Activated CD4-positive, alpha-beta memory T cell treated with anti-CD3 and anti-CD28 coated beads for 36 hours (primary cell): ENCODE measurements at regions of chr19 and their contacts with region 1.

Region 1: GRCh38 chr19:45817010-45817724 is 2.1 kb upstream of the RSPH6A start:
- DNase-seq: peak; percentile 97
- H3K4me3 Mint-ChIP-seq: peak overlapping the region; percentile 12
- H3K27ac Mint-ChIP-seq: peak overlapping the region; percentile 13
- H3K4me1 Mint-ChIP-seq: no peaks in the 10 kb centered on the region
- H3K27me3 Mint-ChIP-seq: no peaks in the 10 kb centered on the region

Region 2: GRCh38 chr19:45770192-45771101 is 46.7 kb before region 1 on chr19:
- CTCF ChIA-PET with region 1: interaction called, 42 read pairs
- POLR2A ChIA-PET with region 1: no interaction called
- intact Hi-C with region 1: no loop called
- DNase-seq: peak; percentile 92
- H3K4me3 Mint-ChIP-seq: peak overlapping the region; percentile 78
- H3K27ac Mint-ChIP-seq: peak overlapping the region; percentile 28
- H3K4me1 Mint-ChIP-seq: peaks cover 10% of the 10 kb centered on the region
- H3K27me3 Mint-ChIP-seq: peaks cover 9% of the 10 kb centered on the region

Region 3: GRCh38 chr19:45798995-45799517 is 18.1 kb before region 1 on chr19:
- CTCF ChIA-PET with region 1: interaction called, 20 read pairs
- POLR2A ChIA-PET with region 1: interaction called, 5 read pairs
- intact Hi-C with region 1: no loop called
- DNase-seq: peak; percentile 71
- H3K4me3 Mint-ChIP-seq: peak overlapping the region; percentile 3
- H3K27ac Mint-ChIP-seq: peak overlapping the region; percentile 23
- H3K4me1 Mint-ChIP-seq: peaks cover 10% of the 10 kb centered on the region
- H3K27me3 Mint-ChIP-seq: peaks cover 34% of the 10 kb centered on the region

Region 4: GRCh38 chr19:45834970-45835369 is 17.8 kb after region 1 on chr19:
- CTCF ChIA-PET with region 1: interaction called, 11 read pairs
- POLR2A ChIA-PET with region 1: no interaction called
- intact Hi-C with region 1: no loop called
- DNase-seq: no peak
- H3K4me3 Mint-ChIP-seq: no peak overlapping the region
- H3K27ac Mint-ChIP-seq: no peak overlapping the region
- H3K4me1 Mint-ChIP-seq: no peaks in the 10 kb centered on the region
- H3K27me3 Mint-ChIP-seq: no peaks in the 10 kb centered on the region

Region 5: DNA sequence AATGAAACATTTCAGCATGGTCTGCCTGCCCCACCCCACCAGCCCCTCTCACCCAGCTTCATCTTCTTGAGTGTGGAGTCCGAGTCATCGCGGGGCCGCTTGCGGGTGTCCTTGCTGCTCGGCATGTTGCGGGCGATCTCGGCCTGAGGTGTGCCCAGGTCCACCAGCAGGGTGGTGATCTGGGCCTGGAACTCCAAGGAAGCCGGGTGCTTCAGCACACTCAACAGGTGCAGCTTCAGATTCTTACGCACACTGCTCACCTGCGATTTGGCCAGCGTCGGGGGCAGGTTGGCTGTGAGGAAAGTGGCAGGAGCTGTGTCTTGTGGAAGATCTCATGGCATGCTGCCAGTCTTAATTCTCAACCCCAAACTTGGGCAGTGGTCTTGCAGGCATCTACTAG is 25.0 kb after region 1 on chr19:
- CTCF ChIA-PET with region 1: interaction called, 11 read pairs
- POLR2A ChIA-PET with region 1: no interaction called
- intact Hi-C with region 1: no loop called
- DNase-seq: no peak
- H3K4me3 Mint-ChIP-seq: no peak overlapping the region
- H3K27ac Mint-ChIP-seq: no peak overlapping the region
- H3K4me1 Mint-ChIP-seq: no peaks in the 10 kb centered on the region
- H3K27me3 Mint-ChIP-seq: no peaks in the 10 kb centered on the region

Region 6: DNA sequence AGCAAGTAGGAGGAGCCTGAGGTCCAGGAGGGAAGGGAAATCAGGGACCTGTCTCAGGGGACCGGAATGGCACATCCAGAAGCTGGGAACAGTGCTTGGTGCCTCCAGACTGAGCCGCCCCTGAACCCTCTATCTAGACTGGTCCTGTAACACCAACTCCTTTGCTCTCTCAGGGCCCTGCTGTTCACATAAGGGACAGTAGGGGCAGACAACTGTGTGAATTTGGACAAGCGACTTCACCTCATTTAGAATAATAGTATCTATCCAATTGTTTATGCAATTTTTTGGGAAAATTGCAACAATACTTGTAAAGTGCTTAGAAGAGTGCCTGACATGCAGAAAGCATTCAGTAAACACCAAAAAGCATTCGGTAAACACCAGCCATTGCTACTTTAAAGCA is 31.8 kb after region 1 on chr19:
- CTCF ChIA-PET with region 1: interaction called, 17 read pairs
- POLR2A ChIA-PET with region 1: no interaction called
- intact Hi-C with region 1: no loop called
- DNase-seq: no peak
- H3K4me3 Mint-ChIP-seq: no peak overlapping the region
- H3K27ac Mint-ChIP-seq: no peak overlapping the region
- H3K4me1 Mint-ChIP-seq: no peaks in the 10 kb centered on the region
- H3K27me3 Mint-ChIP-seq: no peaks in the 10 kb centered on the region

Region 7: GRCh38 chr19:45886427-45887199 is 69.4 kb after region 1 on chr19:
- CTCF ChIA-PET with region 1: interaction called, 24 read pairs
- POLR2A ChIA-PET with region 1: no interaction called
- intact Hi-C with region 1: loop called (anchors 1 kb)
- DNase-seq: peak; percentile 95
- H3K4me3 Mint-ChIP-seq: peak overlapping the region; percentile 85
- H3K27ac Mint-ChIP-seq: peak overlapping the region; percentile 92
- H3K4me1 Mint-ChIP-seq: peaks cover 22% of the 10 kb centered on the region
- H3K27me3 Mint-ChIP-seq: no peaks in the 10 kb centered on the region

Region 8: GRCh38 chr19:46147791-46148288 is 330.7 kb after region 1 on chr19 and contains the start of gene IGFL2:
- CTCF ChIA-PET with region 1: no interaction called
- POLR2A ChIA-PET with region 1: no interaction called
- intact Hi-C with region 1: no loop called
- DNase-seq: peak; percentile 29
- H3K4me3 Mint-ChIP-seq: no peak within 1 kb of the TSS
- H3K27ac Mint-ChIP-seq: no peak within 1 kb of the TSS
- H3K4me1 Mint-ChIP-seq: peaks cover 9% of the 10 kb centered on the region
- H3K27me3 Mint-ChIP-seq: peaks cover 37% of the 10 kb centered on the region
- total RNA-seq, gene IGFL2: not detected